ENCODE measurements at regions of chrX and their contacts with region 1.

Region 1: DNA sequence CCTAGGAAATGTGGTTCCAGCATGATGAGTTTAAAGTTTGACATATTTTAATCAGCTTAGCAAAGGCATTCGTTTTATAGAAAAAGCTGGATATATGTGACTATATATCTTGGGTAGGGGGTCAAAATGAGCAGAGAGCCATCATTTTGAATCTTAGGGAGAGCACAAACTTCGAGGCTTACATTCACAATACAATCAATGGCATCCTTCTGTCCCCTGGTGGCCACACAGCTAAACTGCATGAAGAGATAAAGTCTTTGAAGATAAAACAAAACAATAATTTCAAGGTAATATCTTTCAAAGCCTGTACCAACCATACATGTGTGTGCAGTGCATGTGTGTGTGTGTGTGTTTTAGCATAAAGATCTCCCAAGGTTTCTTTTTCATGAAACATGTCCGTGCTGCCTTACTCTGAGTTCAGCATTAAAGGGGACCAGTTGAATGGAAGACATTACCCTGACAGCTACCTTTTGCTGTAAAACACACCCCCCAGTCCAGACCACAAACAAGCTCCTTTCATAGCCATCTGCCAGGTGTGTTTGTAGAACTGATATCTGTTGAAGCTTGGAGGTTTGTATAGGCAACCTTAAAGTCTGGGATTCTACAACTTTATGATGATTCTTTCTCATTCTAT is 22.0 kb downstream of the DYNLT3 start:
- DNase-seq: peak in 1 of 2 donors; percentile 58
- ATAC-seq: peak; percentile 64
- H3K4me3 ChIP-seq: no peak overlapping the region
- H3K27ac ChIP-seq: no peak overlapping the region
- H3K4me1 ChIP-seq: no peaks in the 10 kb centered on the region
- H3K27me3 ChIP-seq: no peaks in the 10 kb centered on the region

Region 2: GRCh38 chrX:37509349-37509748 is 316.0 kb before region 1 on chrX:
- intact Hi-C with region 1: loop called (anchors 5 kb)
- DNase-seq: no peak
- ATAC-seq: no peak
- H3K4me3 ChIP-seq: no peak overlapping the region
- H3K27ac ChIP-seq: no peak overlapping the region
- H3K4me1 ChIP-seq: no peaks in the 10 kb centered on the region
- H3K27me3 ChIP-seq: no peaks in the 10 kb centered on the region

Region 3: DNA sequence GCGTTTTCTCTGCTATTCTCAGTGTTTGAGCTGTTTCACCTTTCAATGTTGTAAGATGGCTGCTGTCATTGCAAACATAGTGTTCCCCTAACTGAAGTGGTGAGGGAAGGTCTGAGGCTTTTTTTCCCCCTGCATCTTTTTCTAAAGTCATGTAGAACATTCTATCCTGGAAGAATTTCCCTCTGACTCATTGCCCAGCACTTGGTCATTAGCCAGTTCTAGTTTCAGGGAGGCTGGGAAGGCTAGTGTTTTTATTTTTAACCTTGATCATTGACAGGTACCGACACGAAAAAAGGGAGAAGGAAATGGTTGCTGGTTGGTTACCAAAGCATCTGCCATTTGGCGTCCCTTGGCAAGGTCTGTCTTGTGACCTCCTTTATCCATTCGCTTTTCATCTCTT is 247.3 kb before region 1 on chrX:
- intact Hi-C with region 1: loop called in 1 of 2 experiments (anchors 5 kb)
- DNase-seq: no peak
- ATAC-seq: no peak
- H3K4me3 ChIP-seq: no peak overlapping the region
- H3K27ac ChIP-seq: no peak overlapping the region
- H3K4me1 ChIP-seq: peaks cover 0 to 1% of the 10 kb centered on the region in 2 donors
- H3K27me3 ChIP-seq: no peaks in the 10 kb centered on the region

Region 4: GRCh38 chrX:37745354-37745753 is 80.0 kb before region 1 on chrX:
- intact Hi-C with region 1: loop called (anchors 10 kb)
- DNase-seq: peak; percentile 86 to 89
- ATAC-seq: peak; percentile 72
- H3K4me3 ChIP-seq: no peak overlapping the region
- H3K27ac ChIP-seq: no peak overlapping the region
- H3K4me1 ChIP-seq: no peaks in the 10 kb centered on the region
- H3K27me3 ChIP-seq: no peaks in the 10 kb centered on the region

Region 5: GRCh38 chrX:37986893-37987292 is 161.6 kb after region 1 on chrX:
- intact Hi-C with region 1: no loop called
- DNase-seq: no peak
- ATAC-seq: no peak
- H3K4me3 ChIP-seq: no peak overlapping the region
- H3K27ac ChIP-seq: no peak overlapping the region
- H3K4me1 ChIP-seq: no peaks in the 10 kb centered on the region
- H3K27me3 ChIP-seq: no peaks in the 10 kb centered on the region